ENCODE measurements at regions of chr6 and their contacts with region 1.

Region 1: DNA sequence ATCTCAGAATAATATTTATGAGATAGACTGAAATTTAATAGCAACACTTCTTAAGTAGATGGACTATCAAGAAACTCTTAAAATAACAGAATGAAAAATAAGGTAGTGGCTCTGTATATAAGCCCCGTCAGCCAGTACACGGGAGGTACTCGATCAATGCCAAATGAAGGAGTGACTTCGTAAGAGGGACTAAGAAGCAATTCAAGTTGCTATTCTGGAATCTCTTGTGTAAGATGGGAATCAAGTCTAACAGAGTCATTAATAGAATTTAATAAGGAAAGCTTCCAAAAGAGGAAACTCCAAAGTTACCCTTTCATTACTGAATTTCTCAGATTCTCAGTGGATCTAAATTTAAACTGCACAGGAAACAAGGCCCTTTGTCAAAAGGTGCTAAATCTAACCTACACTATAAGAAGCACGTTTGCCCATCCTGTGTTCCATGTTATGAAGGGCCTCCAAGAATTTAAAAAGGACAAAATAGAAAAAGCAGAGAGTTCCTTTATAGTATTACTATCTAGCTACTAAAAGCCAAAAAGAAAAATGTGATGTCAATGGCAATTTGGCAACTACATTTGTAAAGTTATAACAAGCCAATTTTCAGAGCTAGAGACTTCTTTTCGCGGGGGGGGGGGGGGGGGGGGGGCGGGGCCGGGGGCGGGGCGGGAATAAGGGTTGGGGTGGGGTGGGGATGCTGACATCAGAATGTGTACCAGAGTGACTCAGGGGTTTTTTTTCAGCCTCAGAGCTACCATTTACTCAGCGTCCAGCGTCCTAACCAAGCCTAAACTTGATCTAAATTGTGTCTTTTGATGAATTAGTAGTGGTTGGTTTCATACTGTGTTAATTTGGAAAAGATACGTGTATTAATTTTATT is 200.6 kb downstream of the GMPR start:
- DNase-seq: peak; percentile 39
- ATAC-seq: no peak
- H3K4me3 Mint-ChIP-seq: peak overlapping the region; percentile 43
- H3K27ac Mint-ChIP-seq: peak overlapping the region; percentile 71
- H3K4me1 Mint-ChIP-seq: peaks cover 47% of the 10 kb centered on the region
- H3K27me3 Mint-ChIP-seq: no peaks in the 10 kb centered on the region
- CTCF ChIP-seq: no peak

Region 2: GRCh38 chr6:16471222-16471909 is 32.4 kb after region 1 on chr6:
- CTCF ChIA-PET with region 1: interaction called, 3 read pairs
- POLR2A ChIA-PET with region 1: interaction called, 3 read pairs
- intact Hi-C with region 1: loop called (anchors 5 kb)
- DNase-seq: peak; percentile 55
- ATAC-seq: peak; percentile 51
- H3K4me3 Mint-ChIP-seq: no peak overlapping the region
- H3K27ac Mint-ChIP-seq: peak overlapping the region; percentile 86
- H3K4me1 Mint-ChIP-seq: peaks cover 78% of the 10 kb centered on the region
- H3K27me3 Mint-ChIP-seq: no peaks in the 10 kb centered on the region
- CTCF ChIP-seq: no peak